Activated T-helper 2 cell treated with anti-CD3 and anti-CD28 coated beads, Interferon-gamma antibody, Interleukin-2, Interleukin-4, amounts not matched to agents 10 μg/mL and 5 μg/mL and 100 μg/mL, durations not matched to agents 14 hours and 24 hours and 36 hours (primary cell): ENCODE measurements at regions of chr17 and their contacts with region 1.

Region 1: DNA sequence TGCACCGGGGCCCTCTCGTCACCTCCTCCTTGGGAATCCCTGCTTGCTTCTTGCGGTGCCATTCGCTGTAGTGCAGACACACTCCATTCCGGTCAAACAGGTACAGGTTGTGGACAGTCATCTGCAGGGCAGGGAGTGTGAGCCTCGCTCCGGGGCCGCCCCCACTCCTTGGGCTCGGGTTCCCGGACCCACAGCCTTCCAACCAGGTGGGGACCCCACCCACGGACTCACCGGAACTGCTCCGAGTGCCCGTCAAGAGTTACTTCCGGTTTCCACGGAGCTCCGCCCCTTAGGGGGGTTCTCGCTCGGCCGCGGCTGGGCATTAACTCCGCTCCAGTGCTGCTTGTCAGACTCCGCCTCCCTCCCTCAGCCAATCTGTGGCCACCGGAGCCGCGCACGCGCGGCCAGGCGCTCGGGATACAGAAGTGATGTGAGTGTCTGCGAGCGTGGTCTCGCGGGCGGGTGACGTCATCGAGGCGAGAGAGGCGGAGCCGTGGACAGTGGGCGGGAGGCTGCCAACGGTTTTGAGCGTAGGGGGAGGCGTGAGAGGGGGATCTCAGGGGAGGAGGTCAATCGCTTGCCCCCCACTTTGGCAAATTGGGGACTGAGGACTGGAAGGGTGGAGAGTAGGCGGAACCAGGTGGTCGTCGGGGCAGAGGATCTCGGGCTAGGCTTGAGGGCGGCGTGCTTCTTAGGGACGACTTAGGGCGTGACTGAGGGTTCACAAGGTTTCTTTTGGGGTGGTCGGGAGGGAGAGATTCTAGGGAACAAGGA is at the starts of genes CNTROB and TRAPPC1:
- DNase-seq: peak; percentile 100
- H3K4me3 Mint-ChIP-seq: peak within 1 kb of the TSS; percentile 97
- H3K27ac Mint-ChIP-seq: peak within 1 kb of the TSS; percentile 99
- H3K4me1 Mint-ChIP-seq: peaks cover 41% of the 10 kb centered on the region
- H3K27me3 Mint-ChIP-seq: no peaks in the 10 kb centered on the region
- total RNA-seq, gene CNTROB: 60.0 and 60.3 TPM in 2 replicates
- total RNA-seq, gene TRAPPC1: 156 and 190 TPM in 2 replicates

Region 2: GRCh38 chr17:7825206-7825990 is 106.5 kb before region 1 on chr17:
- intact Hi-C with region 1: no loop called
- DNase-seq: no peak
- H3K4me3 Mint-ChIP-seq: no peak overlapping the region
- H3K27ac Mint-ChIP-seq: no peak overlapping the region
- H3K4me1 Mint-ChIP-seq: peaks cover 8% of the 10 kb centered on the region
- H3K27me3 Mint-ChIP-seq: peaks cover 25% of the 10 kb centered on the region

Region 3: GRCh38 chr17:7844292-7845154 is 87.4 kb before region 1 on chr17:
- intact Hi-C with region 1: loop called (anchors 5 kb)
- DNase-seq: peak; percentile 86
- H3K4me3 Mint-ChIP-seq: peak overlapping the region; percentile 90
- H3K27ac Mint-ChIP-seq: peak overlapping the region; percentile 100
- H3K4me1 Mint-ChIP-seq: peaks cover 23% of the 10 kb centered on the region
- H3K27me3 Mint-ChIP-seq: no peaks in the 10 kb centered on the region

Region 4: DNA sequence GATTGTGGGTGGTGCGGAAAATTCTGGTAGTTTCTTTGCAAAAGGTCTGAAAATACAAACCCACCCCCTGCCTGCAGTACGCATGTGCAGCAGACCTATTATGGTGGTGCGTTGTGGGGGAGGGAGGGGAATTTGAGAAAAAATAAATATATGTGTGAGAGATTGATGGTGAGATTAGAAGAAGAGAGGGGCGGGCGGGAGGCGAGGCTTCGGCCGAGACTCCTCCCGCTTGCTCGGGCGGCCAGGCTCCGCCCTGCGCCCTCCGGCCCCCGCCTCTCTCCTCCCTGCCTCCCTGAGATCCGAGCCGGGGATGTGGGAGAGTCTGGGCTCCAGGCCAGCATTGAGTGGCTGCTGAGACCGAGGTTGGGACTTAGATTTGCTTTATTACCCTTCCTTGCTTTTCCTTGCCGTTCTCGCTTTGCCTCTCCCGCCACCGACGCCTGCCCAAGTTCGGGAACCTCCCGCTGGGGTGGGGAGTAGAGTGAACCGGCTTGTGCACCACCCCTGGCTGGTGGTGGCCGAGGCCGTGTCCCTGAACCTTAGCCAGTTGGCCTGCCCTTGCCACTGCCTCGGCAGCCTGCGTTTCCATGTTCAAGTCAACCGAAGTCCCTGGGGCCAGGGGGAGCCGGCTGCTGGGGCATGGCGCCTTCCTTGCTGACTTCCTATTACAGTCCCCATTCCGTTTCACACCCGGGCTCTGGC is 44.3 kb before region 1 on chr17:
- intact Hi-C with region 1: loop called (anchors 1 kb)
- DNase-seq: peak; percentile 87
- H3K4me3 Mint-ChIP-seq: no peak overlapping the region
- H3K27ac Mint-ChIP-seq: no peak overlapping the region
- H3K4me1 Mint-ChIP-seq: peaks cover 8% of the 10 kb centered on the region
- H3K27me3 Mint-ChIP-seq: no peaks in the 10 kb centered on the region

Region 5: DNA sequence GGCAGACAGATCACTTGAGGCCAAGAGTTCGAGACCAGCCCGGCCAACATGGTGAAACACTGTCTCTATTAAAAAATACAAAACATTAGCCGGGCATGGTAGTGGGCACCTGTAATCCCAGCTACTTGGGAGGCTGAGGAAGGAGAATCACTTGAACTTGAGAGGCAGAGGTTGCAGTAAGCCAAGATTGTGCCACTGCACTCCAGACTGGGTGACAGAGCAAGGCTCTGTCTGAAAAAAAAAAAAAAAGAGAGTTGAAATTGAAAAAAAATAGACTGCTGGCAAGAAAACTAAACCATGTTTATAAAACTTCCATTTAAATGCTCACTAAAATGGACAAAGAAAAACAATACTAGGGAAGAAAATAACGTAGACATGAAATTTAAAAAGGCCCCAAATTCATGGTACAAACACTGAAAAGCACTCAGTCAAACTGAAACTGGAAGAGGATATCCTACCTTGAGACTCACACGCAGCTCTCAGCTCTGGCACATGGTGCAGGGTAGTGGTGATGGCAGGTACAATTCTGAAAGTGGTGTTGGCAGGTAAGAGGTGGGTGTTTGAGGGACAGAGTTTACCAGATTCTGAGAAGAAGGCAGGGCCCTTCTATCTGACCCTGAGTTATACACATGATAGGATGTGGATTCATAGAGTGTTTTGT is 19.4 kb after region 1 on chr17:
- intact Hi-C with region 1: loop called (anchors 2 kb)
- DNase-seq: peak; percentile 47
- H3K4me3 Mint-ChIP-seq: no peak overlapping the region
- H3K27ac Mint-ChIP-seq: peak overlapping the region; percentile 76
- H3K4me1 Mint-ChIP-seq: peaks cover 13% of the 10 kb centered on the region
- H3K27me3 Mint-ChIP-seq: no peaks in the 10 kb centered on the region

Region 6: DNA sequence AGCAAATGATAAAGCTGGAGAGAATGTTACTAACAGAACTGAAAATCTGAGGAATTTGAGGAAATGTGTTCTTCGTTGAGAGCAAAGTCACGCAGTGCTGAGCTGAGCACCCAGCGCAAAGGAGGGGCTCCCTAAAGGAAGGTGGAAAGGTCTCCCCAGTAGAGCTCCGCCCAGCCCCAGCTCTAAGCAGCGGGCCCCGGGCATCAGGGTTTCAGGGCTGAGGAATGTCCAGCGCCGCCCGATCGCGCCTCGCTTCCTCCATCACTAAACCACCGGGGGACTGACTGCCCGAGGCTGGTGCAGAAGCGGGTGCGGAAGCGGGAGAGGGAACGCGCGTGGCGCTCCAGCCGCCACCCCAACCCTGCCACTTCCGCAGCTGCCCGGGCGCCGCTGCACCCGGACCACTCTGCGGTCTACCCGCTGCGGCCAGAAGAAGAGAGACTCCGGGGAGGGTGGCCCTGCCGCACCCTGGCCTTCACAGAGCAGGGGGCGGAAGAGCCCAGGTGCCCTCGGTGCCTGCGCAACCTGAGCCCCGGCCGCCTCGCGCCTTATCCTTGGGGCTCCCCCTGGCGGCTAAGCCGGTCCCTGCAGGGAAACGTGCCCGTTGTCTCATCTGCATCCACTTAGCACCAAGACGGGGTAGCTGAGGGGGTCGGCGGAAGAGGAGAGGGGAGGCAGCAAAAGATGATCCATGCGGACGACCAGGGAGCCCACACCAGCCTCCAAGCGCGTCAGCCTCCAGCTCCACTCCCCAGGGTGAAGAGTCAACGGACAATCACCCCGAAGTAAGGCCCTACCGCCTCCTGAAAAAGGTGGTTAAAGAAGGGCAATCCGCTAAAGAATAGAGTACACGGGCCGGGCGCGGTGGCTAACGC is 58.1 kb after region 1 on chr17:
- intact Hi-C with region 1: loop called (anchors 1 kb)
- DNase-seq: peak; percentile 86
- H3K4me3 Mint-ChIP-seq: peak overlapping the region; percentile 67
- H3K27ac Mint-ChIP-seq: peak overlapping the region; percentile 73
- H3K4me1 Mint-ChIP-seq: peaks cover 20% of the 10 kb centered on the region
- H3K27me3 Mint-ChIP-seq: peaks cover 17% of the 10 kb centered on the region